Activated CD4-positive, alpha-beta T cell treated with anti-CD3 and anti-CD28 coated beads for 36 hours (primary cell): ENCODE measurements at regions of chr1 and their contacts with region 1.

Region 1: GRCh38 chr1:32716312-32717148 is 14.0 kb upstream of the SYNC start:
- DNase-seq: peak; percentile 88
- ATAC-seq: peak; percentile 93
- H3K4me3 Mint-ChIP-seq: no peak overlapping the region
- H3K27ac Mint-ChIP-seq: no peak overlapping the region
- H3K4me1 Mint-ChIP-seq: peaks cover 12% of the 10 kb centered on the region
- H3K27me3 Mint-ChIP-seq: peaks cover 2% of the 10 kb centered on the region

Region 2: DNA sequence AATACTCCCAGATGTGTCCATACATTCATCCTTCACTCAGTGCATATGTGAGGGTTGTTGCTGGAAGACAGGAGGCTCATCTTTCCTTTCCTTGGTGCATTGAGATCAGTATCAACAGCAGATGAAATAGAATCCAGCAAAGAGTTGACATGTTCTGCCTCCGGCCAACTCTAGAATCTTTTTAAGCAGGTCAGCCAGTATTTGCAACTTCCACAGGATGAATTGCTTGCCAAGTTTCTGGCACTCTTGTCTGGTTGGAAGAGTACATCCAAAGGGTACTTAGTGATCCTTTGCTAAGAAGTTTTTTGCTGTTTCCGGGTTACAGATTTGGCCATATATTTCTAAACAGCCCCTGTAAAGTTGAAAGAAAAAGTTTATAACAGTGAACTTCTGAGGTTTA is 35.0 kb before region 1 on chr1:
- CTCF ChIA-PET with region 1: no interaction called
- POLR2A ChIA-PET with region 1: no interaction called
- intact Hi-C with region 1: no loop called
- DNase-seq: no peak
- ATAC-seq: no peak
- H3K4me3 Mint-ChIP-seq: no peak overlapping the region
- H3K27ac Mint-ChIP-seq: no peak overlapping the region
- H3K4me1 Mint-ChIP-seq: peaks cover 13% of the 10 kb centered on the region
- H3K27me3 Mint-ChIP-seq: no peaks in the 10 kb centered on the region

Region 3: GRCh38 chr1:32702599-32703478 is 13.7 kb before region 1 on chr1 and contains the start of gene SYNC:
- CTCF ChIA-PET with region 1: interaction called, 22 read pairs
- POLR2A ChIA-PET with region 1: no interaction called
- intact Hi-C with region 1: no loop called
- DNase-seq: peak; percentile 40
- ATAC-seq: peak; percentile 55
- H3K4me3 Mint-ChIP-seq: peak within 1 kb of the TSS; percentile 15
- H3K27ac Mint-ChIP-seq: no peak within 1 kb of the TSS
- H3K4me1 Mint-ChIP-seq: peaks cover 9% of the 10 kb centered on the region
- H3K27me3 Mint-ChIP-seq: peaks cover 27% of the 10 kb centered on the region
- total RNA-seq, gene SYNC: not detected

Region 4: GRCh38 chr1:32761253-32761880 is 44.8 kb after region 1 on chr1:
- CTCF ChIA-PET with region 1: interaction called, 14 read pairs
- POLR2A ChIA-PET with region 1: no interaction called
- intact Hi-C with region 1: loop called in 1 of 2 experiments (anchors 5 kb)
- DNase-seq: peak; percentile 81
- ATAC-seq: peak; percentile 80
- H3K4me3 Mint-ChIP-seq: no peak overlapping the region
- H3K27ac Mint-ChIP-seq: peak overlapping the region; percentile 45
- H3K4me1 Mint-ChIP-seq: peaks cover 26% of the 10 kb centered on the region
- H3K27me3 Mint-ChIP-seq: no peaks in the 10 kb centered on the region

Region 5: GRCh38 chr1:32870615-32871363 is 154.3 kb after region 1 on chr1 and contains the start of gene FNDC5:
- CTCF ChIA-PET with region 1: interaction called, 9 read pairs
- POLR2A ChIA-PET with region 1: no interaction called
- intact Hi-C with region 1: loop called (anchors 1 kb)
- DNase-seq: no peak
- ATAC-seq: no peak
- H3K4me3 Mint-ChIP-seq: no peak within 1 kb of the TSS
- H3K27ac Mint-ChIP-seq: no peak within 1 kb of the TSS
- H3K4me1 Mint-ChIP-seq: no peaks in the 10 kb centered on the region
- H3K27me3 Mint-ChIP-seq: peaks cover 42% of the 10 kb centered on the region
- total RNA-seq, gene FNDC5: not detected